Heart right ventricle (tissue), 16 donors: ENCODE measurements at regions of chr1 and their contacts with region 1.

Region 1: DNA sequence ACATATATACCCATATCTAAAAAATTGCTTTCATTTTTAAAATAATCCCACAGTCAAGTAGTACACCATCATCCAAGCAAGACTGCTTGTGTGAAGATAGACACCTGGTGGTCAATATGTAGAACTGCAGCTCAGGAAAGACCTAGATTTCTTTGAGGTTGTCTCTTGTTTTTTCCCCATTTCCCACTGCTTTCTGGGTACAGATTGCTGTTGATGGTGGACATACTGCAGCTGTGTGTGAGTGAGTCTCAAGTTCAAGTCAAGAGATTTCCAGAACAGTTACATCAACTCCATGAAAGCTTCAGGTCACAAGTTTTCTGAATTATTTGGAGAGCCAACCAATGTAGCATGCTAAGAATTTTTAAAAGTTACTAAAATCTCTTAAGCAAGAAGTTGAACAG is 306.4 kb downstream of the DUSP10 start:
- DNase-seq: no peak
- ATAC-seq: peak in 7 of 8 donors; percentile 38 to 83 (median 76)
- H3K4me3 ChIP-seq: no peak overlapping the region
- H3K27ac ChIP-seq: peak overlapping the region in 2 of 10 donors; percentile 23 to 38
- H3K4me1 ChIP-seq: peaks cover 0 to 28% (median 8%) of the 10 kb centered on the region in 9 donors
- H3K27me3 ChIP-seq: no peaks in the 10 kb centered on the region
- CTCF ChIP-seq: peak; percentile 87 to 96 (median 95)

Region 2: DNA sequence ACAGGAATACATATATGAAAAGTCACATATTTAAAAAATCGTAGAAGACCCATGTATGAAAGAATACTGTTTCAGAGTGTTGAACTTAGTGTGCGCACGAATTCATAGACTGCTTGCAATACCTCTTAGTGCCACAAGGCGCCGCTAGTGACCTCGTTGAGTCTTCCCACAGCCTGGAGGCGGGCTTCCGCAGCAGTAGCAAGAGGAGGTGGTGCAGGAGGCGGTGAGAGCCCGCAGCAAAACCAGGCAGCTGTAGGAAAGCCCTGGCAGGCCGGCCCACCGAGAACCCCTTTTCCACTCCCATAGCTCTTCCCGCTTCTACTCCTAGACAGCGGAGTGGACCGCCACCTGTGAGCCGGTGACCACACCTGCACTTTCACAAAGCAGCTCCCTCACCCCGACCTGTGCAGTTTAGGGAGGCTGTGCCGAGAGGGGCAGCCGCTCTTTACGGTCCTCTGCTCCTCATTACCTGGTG is 625.3 kb before region 1 on chr1:
- intact Hi-C with region 1: loop called in 5 of 10 experiments (anchors 2 to 10 kb)
- DNase-seq: peak; percentile 79
- ATAC-seq: peak; percentile 79 to 93 (median 87)
- H3K4me3 ChIP-seq: peak overlapping the region in 8 of 10 donors; percentile 18 to 42 (median 34)
- H3K27ac ChIP-seq: peak overlapping the region in 2 of 10 donors; percentile 21 to 33
- H3K4me1 ChIP-seq: peaks cover 4 to 15% (median 12%) of the 10 kb centered on the region in 9 donors
- H3K27me3 ChIP-seq: no peaks in the 10 kb centered on the region
- CTCF ChIP-seq: peak; percentile 83 to 96 (median 95)

Region 3: GRCh38 chr1:221263831-221264767 is 171.4 kb before region 1 on chr1:
- intact Hi-C with region 1: loop called in 8 of 10 experiments (anchors 2 to 10 kb)
- DNase-seq: peak in 1 of 2 donors; percentile 68
- ATAC-seq: peak; percentile 41 to 87 (median 82)
- H3K4me3 ChIP-seq: peak overlapping the region in 2 of 10 donors; percentile 1 to 8
- H3K27ac ChIP-seq: peak overlapping the region in 8 of 10 donors; percentile 41 to 80 (median 62)
- H3K4me1 ChIP-seq: peaks cover 0 to 22% (median 17%) of the 10 kb centered on the region in 9 donors
- H3K27me3 ChIP-seq: no peaks in the 10 kb centered on the region
- CTCF ChIP-seq: peak; percentile 24 to 69 (median 57)

Region 4: DNA sequence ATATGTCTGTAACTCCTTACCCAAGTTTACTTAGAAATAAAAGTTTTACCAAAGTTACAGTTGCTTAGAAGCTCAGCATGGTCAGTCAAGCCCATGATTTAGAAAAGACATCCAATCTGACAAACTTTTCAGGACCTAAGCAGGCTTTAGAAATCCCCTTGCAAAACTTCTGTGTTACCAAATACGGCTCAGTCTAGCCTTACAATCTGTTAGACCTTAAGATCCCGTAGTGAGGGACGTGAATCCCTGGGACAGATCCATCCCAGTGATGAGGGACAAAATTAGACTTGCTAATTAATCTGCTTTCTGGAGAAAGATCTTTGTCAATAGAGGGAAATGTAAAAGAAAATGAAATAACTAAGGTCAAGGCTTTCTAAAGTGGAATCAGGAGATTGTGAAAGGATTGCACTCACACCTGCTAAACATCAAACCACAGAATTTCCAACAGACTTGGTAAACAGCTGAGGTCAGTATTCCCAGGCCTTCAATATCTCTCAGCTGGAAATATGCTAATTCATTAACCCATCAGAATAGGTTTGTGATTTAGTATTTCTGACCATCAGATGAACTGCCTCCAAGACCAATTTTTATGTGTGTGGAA is 68.9 kb before region 1 on chr1:
- intact Hi-C with region 1: no loop called
- DNase-seq: no peak
- ATAC-seq: no peak
- H3K4me3 ChIP-seq: no peak overlapping the region
- H3K27ac ChIP-seq: no peak overlapping the region
- H3K4me1 ChIP-seq: peaks cover 0 to 6% (median 0%) of the 10 kb centered on the region in 9 donors
- H3K27me3 ChIP-seq: no peaks in the 10 kb centered on the region
- CTCF ChIP-seq: no peak

Region 5: DNA sequence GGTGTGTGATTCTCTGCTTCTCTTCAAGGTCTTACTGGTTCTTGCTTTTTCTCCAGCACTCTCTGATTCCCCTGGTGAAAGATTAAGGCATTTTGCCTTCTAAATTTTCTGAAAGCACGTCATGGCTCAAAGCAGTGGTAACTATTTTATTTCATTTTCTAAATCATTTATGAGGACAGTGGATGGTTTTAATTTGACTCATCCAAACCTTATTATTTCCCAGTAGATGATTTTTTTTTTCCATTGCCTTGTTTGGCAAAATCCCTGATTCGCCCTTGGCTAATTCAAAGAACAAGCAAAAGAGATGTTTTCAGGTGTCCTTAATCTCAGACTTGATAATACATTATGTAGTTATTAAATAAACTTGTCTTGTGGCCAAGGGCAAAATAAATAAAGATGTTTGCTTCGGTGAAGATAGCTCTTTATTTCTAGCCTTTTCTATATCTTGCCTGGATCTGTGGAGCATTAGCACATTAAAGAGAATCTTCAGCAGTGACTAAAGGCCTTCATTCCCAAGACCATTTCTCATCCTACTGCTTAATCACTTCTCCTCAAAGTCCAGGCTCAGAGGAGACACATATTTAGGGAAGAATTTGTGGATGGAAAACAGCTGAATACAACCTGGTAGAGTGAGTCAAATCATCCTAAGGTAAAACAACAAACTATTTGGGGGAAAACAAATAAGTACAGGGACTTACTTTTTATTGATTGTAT is 53.4 kb before region 1 on chr1:
- intact Hi-C with region 1: no loop called
- DNase-seq: no peak
- ATAC-seq: no peak
- H3K4me3 ChIP-seq: no peak overlapping the region
- H3K27ac ChIP-seq: no peak overlapping the region
- H3K4me1 ChIP-seq: no peaks in the 10 kb centered on the region
- H3K27me3 ChIP-seq: no peaks in the 10 kb centered on the region
- CTCF ChIP-seq: no peak